ENCODE measurements at regions of chr6 and their contacts with region 1.

Region 1: GRCh38 chr6:136226027-136226673 is 24.0 kb downstream of the MTFR2 start:
- DNase-seq: peak; percentile 69
- H3K4me3 ChIP-seq: peak overlapping the region in 1 of 2 experiments; percentile 54; a peak in 1 of 4 replicates
- H3K27ac ChIP-seq: no peak overlapping the region
- H3K4me1 ChIP-seq: no peaks in the 10 kb centered on the region; a peak in 1 of 4 replicates
- H3K27me3 ChIP-seq: no peaks in the 10 kb centered on the region
- CTCF ChIP-seq: peak; percentile 100
- EP300 ChIP-seq: no peak
- RAD21 ChIP-seq: peak; percentile 100

Region 2: GRCh38 chr6:135451693-135452092 is 774.5 kb before region 1 on chr6:
- CTCF ChIA-PET with region 1: interaction called, 16 read pairs
- POLR2A ChIA-PET with region 1: no interaction called
- DNase-seq: peak; percentile 7
- H3K4me3 ChIP-seq: no peak overlapping the region; a peak in 1 of 4 replicates
- H3K27ac ChIP-seq: no peak overlapping the region
- H3K4me1 ChIP-seq: no peaks in the 10 kb centered on the region
- H3K27me3 ChIP-seq: no peaks in the 10 kb centered on the region
- CTCF ChIP-seq: peak; percentile 69
- EP300 ChIP-seq: no peak
- RAD21 ChIP-seq: peak; percentile 82

Region 3: GRCh38 chr6:135506270-135506997 is 719.7 kb before region 1 on chr6:
- CTCF ChIA-PET with region 1: interaction called, 10 read pairs
- POLR2A ChIA-PET with region 1: no interaction called
- DNase-seq: peak; percentile 25
- H3K4me3 ChIP-seq: no peak overlapping the region
- H3K27ac ChIP-seq: no peak overlapping the region
- H3K4me1 ChIP-seq: peaks cover 0 to 6% of the 10 kb centered on the region in 2 experiments; a peak in 2 of 4 replicates
- H3K27me3 ChIP-seq: no peaks in the 10 kb centered on the region
- CTCF ChIP-seq: peak; percentile 70
- EP300 ChIP-seq: no peak
- RAD21 ChIP-seq: peak; percentile 83

Region 4: GRCh38 chr6:135546680-135547418 is 679.3 kb before region 1 on chr6:
- CTCF ChIA-PET with region 1: interaction called, 21 read pairs
- POLR2A ChIA-PET with region 1: no interaction called
- DNase-seq: no peak
- H3K4me3 ChIP-seq: no peak overlapping the region
- H3K27ac ChIP-seq: no peak overlapping the region
- H3K4me1 ChIP-seq: no peaks in the 10 kb centered on the region
- H3K27me3 ChIP-seq: no peaks in the 10 kb centered on the region
- CTCF ChIP-seq: no peak
- EP300 ChIP-seq: no peak
- RAD21 ChIP-seq: no peak

Region 5: DNA sequence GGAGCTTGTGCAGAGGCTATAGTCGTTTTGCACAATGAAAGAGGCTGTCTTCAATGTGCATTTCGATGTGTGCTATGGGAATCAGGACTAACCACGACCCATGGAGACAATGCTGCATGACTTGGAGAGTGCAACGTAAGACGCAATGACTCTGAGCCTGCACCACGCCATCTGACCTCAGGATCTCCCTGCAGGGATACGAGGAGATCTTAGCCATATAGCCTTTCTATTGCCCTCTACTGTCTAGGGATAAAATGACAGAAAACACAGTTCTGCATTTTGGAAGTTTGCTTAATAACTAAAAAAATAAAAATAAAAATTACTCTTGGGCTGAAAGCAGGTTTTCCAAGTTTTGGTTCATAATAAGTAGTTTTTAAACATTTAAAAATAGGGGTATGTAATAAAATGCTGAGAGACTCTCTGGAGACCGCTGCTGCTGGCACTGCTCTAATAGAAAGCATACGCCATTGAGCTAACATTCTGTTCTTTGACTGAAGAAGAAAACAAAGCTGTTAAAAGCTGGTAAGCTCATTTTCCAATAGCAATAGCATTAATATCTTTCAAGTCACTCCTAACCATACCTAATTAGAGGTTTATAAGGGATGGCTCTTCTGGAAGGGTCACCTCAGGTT is 287.5 kb before region 1 on chr6:
- CTCF ChIA-PET with region 1: interaction called, 15 read pairs
- POLR2A ChIA-PET with region 1: no interaction called
- DNase-seq: peak; percentile 33
- H3K4me3 ChIP-seq: no peak overlapping the region
- H3K27ac ChIP-seq: peak overlapping the region; percentile 30 to 85
- H3K4me1 ChIP-seq: peaks cover 11 to 21% of the 10 kb centered on the region in 2 experiments
- H3K27me3 ChIP-seq: no peaks in the 10 kb centered on the region
- CTCF ChIP-seq: peak; percentile 47
- EP300 ChIP-seq: no peak
- RAD21 ChIP-seq: peak; percentile 59

Region 6: DNA sequence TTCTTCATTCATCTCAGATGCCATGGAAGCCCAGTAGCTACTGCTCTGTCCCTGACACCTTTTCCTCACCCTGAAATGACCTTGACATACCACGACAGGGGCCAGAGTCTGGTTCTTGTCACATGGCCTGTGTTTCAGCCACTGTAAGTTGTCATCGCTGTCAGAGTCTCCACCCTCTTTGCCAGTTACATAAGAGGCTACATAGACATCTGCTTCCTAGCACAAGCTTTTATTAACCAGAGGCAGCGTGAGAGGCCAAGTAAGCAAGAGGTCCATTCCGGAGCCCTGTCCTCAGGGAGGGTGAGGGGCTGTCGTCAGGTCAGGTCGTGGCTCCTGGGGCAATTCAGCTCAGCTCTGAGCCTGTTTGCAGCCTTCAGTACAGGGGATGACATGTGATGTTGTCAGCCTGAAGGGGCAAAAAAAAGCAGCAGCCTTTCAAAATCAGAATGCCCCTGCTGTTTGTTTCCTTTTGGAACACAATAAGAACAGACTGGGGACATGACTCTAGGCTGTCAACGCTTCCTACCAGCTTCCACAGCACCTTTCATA is 122.3 kb before region 1 on chr6:
- CTCF ChIA-PET with region 1: interaction called, 10 read pairs
- POLR2A ChIA-PET with region 1: no interaction called
- DNase-seq: peak; percentile 48
- H3K4me3 ChIP-seq: peak overlapping the region in 1 of 2 experiments; percentile 9; a peak in 1 of 4 replicates
- H3K27ac ChIP-seq: peak overlapping the region; percentile 38 to 86; a peak in 3 of 4 replicates
- H3K4me1 ChIP-seq: peaks cover 0 to 29% of the 10 kb centered on the region in 2 experiments; a peak in 2 of 4 replicates
- H3K27me3 ChIP-seq: no peaks in the 10 kb centered on the region
- CTCF ChIP-seq: no peak
- EP300 ChIP-seq: peak in 1 of 2 experiments; percentile 81; a peak in 1 of 4 replicates
- RAD21 ChIP-seq: peak; percentile 41; the same call in 1 of the 2 replicates

Region 7: GRCh38 chr6:136201732-136202131 is 24.4 kb before region 1 on chr6:
- CTCF ChIA-PET with region 1: interaction called, 14 read pairs
- POLR2A ChIA-PET with region 1: no interaction called
- DNase-seq: no peak
- H3K4me3 ChIP-seq: no peak overlapping the region
- H3K27ac ChIP-seq: no peak overlapping the region
- H3K4me1 ChIP-seq: no peaks in the 10 kb centered on the region
- H3K27me3 ChIP-seq: no peaks in the 10 kb centered on the region
- CTCF ChIP-seq: no peak
- EP300 ChIP-seq: no peak
- RAD21 ChIP-seq: peak; percentile 67

Region 8: GRCh38 chr6:136335736-136336363 is 109.7 kb after region 1 on chr6:
- CTCF ChIA-PET with region 1: no interaction called
- POLR2A ChIA-PET with region 1: no interaction called
- DNase-seq: no peak
- H3K4me3 ChIP-seq: no peak overlapping the region
- H3K27ac ChIP-seq: no peak overlapping the region
- H3K4me1 ChIP-seq: no peaks in the 10 kb centered on the region; a peak in 1 of 4 replicates
- H3K27me3 ChIP-seq: no peaks in the 10 kb centered on the region
- CTCF ChIP-seq: no peak
- EP300 ChIP-seq: no peak
- RAD21 ChIP-seq: no peak